HEK293 (cell line): ENCODE measurements at regions of chr22 and their contacts with region 1.

Region 1: DNA sequence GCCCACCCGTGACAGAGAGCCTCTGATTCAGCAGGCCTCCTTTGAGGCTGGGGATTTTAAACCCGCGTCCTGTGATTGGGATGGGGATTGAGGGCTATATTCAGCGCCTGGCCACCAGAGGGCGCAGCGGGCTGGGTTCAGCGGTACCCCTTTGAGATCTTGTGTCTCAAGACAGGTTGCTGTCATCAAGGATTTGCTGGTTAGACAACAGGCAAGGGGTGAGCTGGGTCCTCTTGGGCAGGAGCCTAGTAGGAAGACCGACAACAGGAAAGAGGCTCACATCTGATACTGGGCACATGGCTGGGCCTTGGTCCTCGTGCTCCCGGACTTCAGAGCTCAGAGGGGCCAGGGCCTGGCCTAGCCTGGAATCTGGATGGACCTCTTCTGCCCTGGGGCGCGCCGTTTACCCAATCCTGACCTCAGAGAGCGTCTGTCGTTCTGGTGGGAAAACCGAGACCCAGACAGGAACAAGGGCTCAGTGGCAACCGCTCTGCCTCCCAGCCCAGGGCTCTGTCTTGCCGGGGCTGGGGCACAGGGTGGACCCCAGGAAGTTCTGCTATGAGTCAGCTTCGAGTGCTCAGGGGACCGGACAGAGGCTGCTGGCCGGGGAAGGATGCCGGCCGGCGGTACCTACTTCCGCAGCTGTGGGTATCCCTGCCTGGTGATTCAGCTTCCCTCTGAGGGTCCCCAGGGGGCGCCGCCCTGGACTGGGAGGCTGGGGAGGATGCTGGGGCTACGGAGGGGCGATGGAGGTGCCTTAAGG is 929 bp upstream of the SLC35E4 start:
- H3K4me3 ChIP-seq: peak overlapping the region; percentile 3; the same call in 1 of the 2 replicates
- H3K27ac ChIP-seq: peak overlapping the region; percentile 49; the same call in 1 of the 2 replicates
- H3K4me1 ChIP-seq: peaks cover 9% of the 10 kb centered on the region
- CTCF ChIP-seq: peak; percentile 76

Region 2: GRCh38 chr22:30289134-30289979 is 345.3 kb before region 1 on chr22 and contains the start of gene CASTOR1:
- CTCF ChIA-PET with region 1: no interaction called
- POLR2A ChIA-PET with region 1: no interaction called
- H3K4me3 ChIP-seq: peak within 1 kb of the TSS; percentile 60
- H3K27ac ChIP-seq: no peak within 1 kb of the TSS
- H3K4me1 ChIP-seq: no peaks in the 10 kb centered on the region; the same call in 1 of the 2 replicates
- CTCF ChIP-seq: no peak

Region 3: GRCh38 chr22:30490399-30490798 is 144.3 kb before region 1 on chr22:
- CTCF ChIA-PET with region 1: no interaction called
- POLR2A ChIA-PET with region 1: no interaction called
- H3K4me3 ChIP-seq: no peak overlapping the region
- H3K27ac ChIP-seq: no peak overlapping the region
- H3K4me1 ChIP-seq: no peaks in the 10 kb centered on the region
- CTCF ChIP-seq: no peak

Region 4: GRCh38 chr22:30578481-30578880 is 56.2 kb before region 1 on chr22:
- CTCF ChIA-PET with region 1: no interaction called
- POLR2A ChIA-PET with region 1: no interaction called
- H3K4me3 ChIP-seq: no peak overlapping the region
- H3K27ac ChIP-seq: no peak overlapping the region
- H3K4me1 ChIP-seq: no peaks in the 10 kb centered on the region; the same call in 1 of the 2 replicates
- CTCF ChIP-seq: no peak

Region 5: GRCh38 chr22:30606455-30607299 is 28.0 kb before region 1 on chr22 and contains the start of gene TCN2:
- CTCF ChIA-PET with region 1: interaction called, 11 read pairs
- POLR2A ChIA-PET with region 1: interaction called, 3 read pairs
- H3K4me3 ChIP-seq: peak within 1 kb of the TSS; percentile 21
- H3K27ac ChIP-seq: no peak within 1 kb of the TSS; the same call in 1 of the 2 replicates
- H3K4me1 ChIP-seq: no peaks in the 10 kb centered on the region
- CTCF ChIP-seq: no peak

Region 6: GRCh38 chr22:30662040-30662439 is 27.4 kb after region 1 on chr22:
- CTCF ChIA-PET with region 1: interaction called, 14 read pairs
- POLR2A ChIA-PET with region 1: interaction called, 10 read pairs
- H3K4me3 ChIP-seq: no peak overlapping the region
- H3K27ac ChIP-seq: no peak overlapping the region
- H3K4me1 ChIP-seq: no peaks in the 10 kb centered on the region
- CTCF ChIP-seq: no peak

Region 7: GRCh38 chr22:30694171-30694639 is 59.6 kb after region 1 on chr22:
- CTCF ChIA-PET with region 1: interaction called, 20 read pairs
- POLR2A ChIA-PET with region 1: interaction called, 11 read pairs
- H3K4me3 ChIP-seq: peak overlapping the region; percentile 73
- H3K27ac ChIP-seq: peak overlapping the region; percentile 83; the same call in 1 of the 2 replicates
- H3K4me1 ChIP-seq: peaks cover 4% of the 10 kb centered on the region; the same call in 1 of the 2 replicates
- CTCF ChIP-seq: peak; percentile 79

Region 8: GRCh38 chr22:30742291-30743256 is 107.9 kb after region 1 on chr22:
- CTCF ChIA-PET with region 1: interaction called, 12 read pairs
- POLR2A ChIA-PET with region 1: no interaction called
- H3K4me3 ChIP-seq: no peak overlapping the region
- H3K27ac ChIP-seq: no peak overlapping the region
- H3K4me1 ChIP-seq: no peaks in the 10 kb centered on the region
- CTCF ChIP-seq: no peak

Region 9: DNA sequence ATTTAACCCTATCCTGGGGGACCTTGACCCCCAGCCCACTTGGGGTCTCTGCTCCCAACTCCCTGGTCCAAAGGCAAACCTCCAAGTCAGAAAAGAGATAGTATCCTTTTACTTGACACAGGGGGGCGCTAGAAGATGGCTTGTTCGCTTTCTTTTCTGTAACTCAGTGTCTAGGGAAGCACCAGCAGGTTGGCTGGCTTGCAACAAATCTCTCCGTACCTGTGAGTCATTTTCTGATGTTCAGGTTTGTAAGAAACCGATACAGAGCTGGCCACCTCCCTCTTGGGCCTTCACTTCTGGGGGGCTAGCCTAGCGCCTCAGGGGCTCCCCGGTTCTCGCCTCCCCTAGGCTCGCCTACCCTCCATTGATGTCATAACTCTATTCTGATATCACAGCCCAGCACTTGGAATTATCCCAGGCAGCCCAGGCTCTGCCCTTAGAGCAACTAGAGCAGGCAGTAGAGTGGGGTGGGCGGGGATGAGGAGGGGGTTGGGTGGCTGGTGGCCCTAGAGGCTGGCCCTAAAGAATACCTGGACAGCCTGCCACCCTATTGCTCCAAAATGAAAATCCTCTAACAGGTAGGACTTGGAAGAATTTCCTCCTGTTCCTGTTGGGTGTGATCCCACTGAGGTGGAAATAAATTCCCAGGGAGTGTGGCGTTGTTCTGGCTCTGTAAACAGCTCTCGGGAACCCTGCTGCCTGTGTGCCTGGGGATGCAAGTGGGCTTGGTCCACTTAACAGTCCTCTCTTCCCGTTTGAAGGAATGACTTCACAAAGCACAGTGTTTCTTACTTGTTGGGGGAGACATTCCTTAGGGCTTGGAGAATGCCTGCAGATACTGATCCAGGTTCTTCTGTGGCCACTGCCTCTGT is 129.4 kb after region 1 on chr22:
- CTCF ChIA-PET with region 1: interaction called, 100 read pairs
- POLR2A ChIA-PET with region 1: no interaction called
- H3K4me3 ChIP-seq: no peak overlapping the region
- H3K27ac ChIP-seq: no peak overlapping the region
- H3K4me1 ChIP-seq: no peaks in the 10 kb centered on the region
- CTCF ChIP-seq: no peak

Region 10: DNA sequence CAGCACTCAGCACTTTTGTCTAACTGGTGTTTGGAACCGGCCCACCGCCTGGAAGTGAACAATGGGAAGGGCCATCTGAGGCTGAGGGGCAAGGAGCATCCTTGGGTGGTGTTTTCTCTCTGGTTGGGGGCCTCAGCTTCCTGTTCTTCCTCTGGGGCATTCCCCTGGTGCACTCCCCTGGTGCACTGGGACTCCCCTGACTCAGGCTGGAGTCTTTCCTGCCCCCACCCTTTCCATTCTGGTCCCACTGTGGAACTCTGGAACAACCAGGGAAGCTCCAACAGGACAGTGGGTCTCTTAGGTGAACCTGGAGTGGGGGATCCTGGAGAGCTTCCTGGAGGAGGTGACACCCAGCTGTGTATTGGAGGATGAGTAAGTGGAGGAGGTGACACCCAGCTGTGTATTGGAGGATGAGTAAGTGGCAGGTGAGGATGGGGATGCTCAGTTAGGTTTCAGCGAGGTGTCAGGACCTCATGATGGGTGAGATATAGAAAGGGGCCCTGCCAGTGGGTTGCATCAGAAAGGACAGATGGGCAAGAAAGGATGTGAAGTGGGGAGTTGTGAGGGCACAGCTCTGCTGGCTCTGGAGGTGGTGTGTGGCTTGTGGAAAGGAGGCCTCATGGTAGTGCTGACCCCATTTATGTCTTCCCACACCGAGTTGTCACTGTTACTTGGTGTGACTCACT is 192.2 kb after region 1 on chr22:
- CTCF ChIA-PET with region 1: no interaction called
- POLR2A ChIA-PET with region 1: no interaction called
- H3K4me3 ChIP-seq: no peak overlapping the region
- H3K27ac ChIP-seq: no peak overlapping the region
- H3K4me1 ChIP-seq: no peaks in the 10 kb centered on the region
- CTCF ChIP-seq: no peak